Posterior vena cava (tissue), 2 donors: ENCODE measurements at regions of chr15 and their contacts with region 1.

Region 1: DNA sequence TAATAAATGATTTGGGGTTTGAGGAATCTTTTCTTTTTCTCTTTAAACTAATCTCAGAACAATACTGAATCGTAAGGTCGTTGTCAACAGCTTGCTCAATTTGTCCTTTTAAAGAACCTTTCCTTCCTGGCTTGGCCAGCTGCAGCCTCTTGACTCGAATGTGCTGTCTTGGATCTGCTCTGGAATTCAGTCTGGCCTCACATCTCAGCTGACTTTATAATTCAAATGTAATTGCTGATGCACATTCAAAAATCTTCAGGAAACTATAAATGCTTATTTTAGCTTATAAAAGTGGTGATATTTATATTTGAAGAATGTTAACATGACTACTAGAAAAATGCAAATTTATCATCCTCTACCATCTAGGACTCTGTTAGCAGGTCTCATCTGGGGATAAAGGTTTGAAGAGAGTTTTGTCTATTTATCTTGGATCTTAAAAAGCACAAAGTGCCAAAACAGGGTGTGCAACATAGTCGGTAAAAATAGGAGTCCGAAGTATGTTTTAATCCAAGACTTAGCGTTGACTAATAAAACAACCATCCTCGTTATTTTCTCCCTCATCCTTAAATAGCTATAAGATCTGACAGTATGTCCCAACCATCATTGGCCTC is 1035.2 kb downstream of the MCTP2 start:
- DNase-seq: no peak

Region 2: GRCh38 chr15:95013381-95013780 is 253.2 kb before region 1 on chr15:
- intact Hi-C with region 1: no loop called
- DNase-seq: no peak

Region 3: DNA sequence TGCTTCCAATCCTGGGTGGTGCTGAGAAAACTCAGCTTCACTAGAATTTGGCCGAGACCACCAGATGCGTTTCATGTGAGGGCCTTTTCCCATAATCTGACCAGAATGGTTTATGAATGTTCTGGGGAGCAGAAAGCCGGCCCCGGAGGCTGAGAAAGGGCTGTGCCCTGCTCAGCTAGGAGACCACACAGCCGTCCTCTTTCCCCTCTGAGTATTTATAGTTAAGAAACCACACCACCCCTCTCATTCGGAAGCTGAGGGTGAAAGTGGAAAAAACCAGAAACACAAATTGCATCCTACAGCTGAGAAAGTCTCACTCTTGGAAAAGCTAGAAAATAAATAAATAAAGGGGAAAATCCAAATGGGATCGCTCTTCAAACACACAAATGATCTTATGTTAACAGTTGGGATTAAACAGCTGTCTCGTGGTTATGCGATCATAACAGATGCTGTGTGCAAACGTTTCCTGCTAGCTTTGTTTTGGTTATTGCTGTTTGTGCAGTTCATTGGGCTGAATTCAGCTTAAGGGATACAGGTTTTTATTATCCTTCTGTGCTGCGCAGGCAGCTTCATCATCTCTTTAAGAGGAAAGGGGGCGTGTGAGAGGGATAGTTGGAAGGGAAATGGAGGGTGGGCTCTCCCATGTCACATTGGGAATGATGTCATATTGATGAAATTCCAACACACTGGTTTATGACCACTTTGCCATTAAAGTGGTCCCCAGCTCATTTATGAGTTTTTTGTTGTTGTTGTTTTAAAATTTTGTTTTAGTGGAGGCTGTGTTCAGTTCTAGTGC is 37.8 kb after region 1 on chr15:
- intact Hi-C with region 1: loop called in 1 of 2 experiments (anchors 5 kb)
- DNase-seq: no peak

Region 4: DNA sequence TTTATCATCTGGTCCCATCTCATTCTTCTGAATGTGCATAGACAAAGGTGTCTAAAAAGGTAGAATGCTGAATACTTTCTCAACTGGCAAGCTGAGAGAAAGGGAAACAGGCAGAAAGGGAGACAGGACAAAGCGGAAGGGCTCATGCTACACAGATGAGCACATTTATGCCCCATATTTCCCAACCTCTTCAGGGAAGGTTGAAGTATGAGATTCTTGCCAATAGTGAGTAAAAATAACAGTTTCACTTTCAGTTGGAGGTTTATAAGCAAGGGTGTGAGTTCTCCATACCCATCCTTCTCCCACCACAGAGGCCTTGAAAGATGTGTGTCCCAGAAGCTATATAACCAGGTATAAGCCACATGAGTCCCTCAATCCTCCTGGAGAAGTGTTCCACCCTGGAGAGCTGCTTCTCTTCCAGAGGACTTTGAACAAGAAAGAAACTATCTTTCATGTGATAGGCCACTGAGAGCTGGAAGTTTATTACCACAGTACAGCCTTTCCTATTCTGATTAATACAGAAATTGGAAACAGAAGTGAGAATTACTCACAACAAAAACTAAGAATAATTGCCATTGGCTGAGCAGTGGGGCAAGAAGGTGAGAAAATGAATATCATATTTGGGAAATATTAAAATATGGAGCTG is 354.5 kb after region 1 on chr15:
- intact Hi-C with region 1: no loop called
- DNase-seq: no peak